ENCODE measurements at regions of chr20 and their contacts with region 1.

Region 1: GRCh38 chr20:31822421-31823330 is 3.5 kb downstream of the MYLK2 start:
- DNase-seq: peak; percentile 81 to 96
- ATAC-seq: peak; percentile 74 to 86
- H3K4me3 ChIP-seq: peak overlapping the region; percentile 21 to 66 (median 26)
- H3K27ac ChIP-seq: peak overlapping the region; percentile 82 to 95 (median 93)
- H3K4me1 ChIP-seq: peaks cover 49 to 79% of the 10 kb centered on the region in 2 donors
- H3K27me3 ChIP-seq: no peaks in the 10 kb centered on the region
- CTCF ChIP-seq: peak; percentile 97 to 99 (median 99)
- POLR2A ChIP-seq: peak in 1 of 2 donors; percentile 28

Region 2: DNA sequence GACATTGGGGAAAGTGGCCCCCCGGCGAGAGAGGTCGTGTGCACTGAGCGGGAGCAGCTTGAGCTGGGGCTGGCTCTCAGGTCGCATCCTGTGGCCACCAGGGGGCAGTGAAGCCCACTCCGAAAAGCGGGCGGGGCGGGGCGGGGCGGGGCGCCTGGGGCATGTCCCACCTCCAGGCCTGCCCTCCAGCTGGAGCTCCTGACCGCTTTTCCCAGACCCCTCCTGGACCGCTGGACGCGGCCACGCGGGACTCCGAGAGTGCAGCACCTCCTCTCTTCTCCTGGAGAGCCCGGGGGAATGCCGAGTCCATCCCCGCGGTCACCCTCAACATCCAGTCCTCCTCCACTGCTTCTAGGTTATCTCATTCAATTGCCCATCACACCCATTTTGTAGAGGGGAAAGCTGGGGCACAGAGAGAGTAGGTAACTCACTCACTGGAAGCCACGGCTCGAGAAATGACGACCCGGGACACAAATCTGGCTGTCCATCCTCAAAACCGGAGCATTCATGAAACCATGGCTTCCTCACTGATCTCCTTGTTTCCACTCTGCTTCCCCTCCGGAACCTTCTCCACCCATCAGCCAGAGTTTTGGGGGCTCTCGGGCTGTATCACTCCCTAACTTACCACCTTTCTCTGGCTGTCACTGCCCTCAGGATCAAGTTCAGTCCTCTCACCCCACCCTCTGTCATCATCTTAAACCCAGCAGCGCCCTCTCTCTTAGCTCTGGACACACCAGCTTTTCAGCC is 160.9 kb before region 1 on chr20:
- in situ Hi-C with region 1: loop called in 1 of 4 experiments (anchors 25 kb)
- intact Hi-C with region 1: no loop called
- DNase-seq: peak; percentile 60 to 74
- ATAC-seq: peak; percentile 83 to 86
- H3K4me3 ChIP-seq: peak overlapping the region; percentile 30 to 62 (median 46)
- H3K27ac ChIP-seq: peak overlapping the region; percentile 63 to 98 (median 80)
- H3K4me1 ChIP-seq: peaks cover 35 to 38% of the 10 kb centered on the region in 2 donors
- H3K27me3 ChIP-seq: no peaks in the 10 kb centered on the region
- CTCF ChIP-seq: peak; percentile 53 to 94 (median 90)
- POLR2A ChIP-seq: peak; percentile 41 to 71

Region 3: GRCh38 chr20:31738729-31739561 is 83.7 kb before region 1 on chr20 and contains the start of gene TPX2:
- in situ Hi-C with region 1: loop called in 3 of 4 experiments (anchors 10 to 25 kb)
- intact Hi-C with region 1: no loop called
- DNase-seq: peak; percentile 95 to 96
- ATAC-seq: peak; percentile 100
- H3K4me3 ChIP-seq: peak within 1 kb of the TSS; percentile 65 to 95 (median 70)
- H3K27ac ChIP-seq: peak within 1 kb of the TSS; percentile 79 to 88 (median 86)
- H3K4me1 ChIP-seq: peaks cover 9 to 12% of the 10 kb centered on the region in 2 donors
- H3K27me3 ChIP-seq: no peaks in the 10 kb centered on the region
- CTCF ChIP-seq: peak in 3 of 5 experiments; percentile 18 to 27 (median 24)
- POLR2A ChIP-seq: peak; percentile 69 to 70
- total RNA-seq, gene TPX2: 0.46 to 1.9 (median 1.0) TPM

Region 4: DNA sequence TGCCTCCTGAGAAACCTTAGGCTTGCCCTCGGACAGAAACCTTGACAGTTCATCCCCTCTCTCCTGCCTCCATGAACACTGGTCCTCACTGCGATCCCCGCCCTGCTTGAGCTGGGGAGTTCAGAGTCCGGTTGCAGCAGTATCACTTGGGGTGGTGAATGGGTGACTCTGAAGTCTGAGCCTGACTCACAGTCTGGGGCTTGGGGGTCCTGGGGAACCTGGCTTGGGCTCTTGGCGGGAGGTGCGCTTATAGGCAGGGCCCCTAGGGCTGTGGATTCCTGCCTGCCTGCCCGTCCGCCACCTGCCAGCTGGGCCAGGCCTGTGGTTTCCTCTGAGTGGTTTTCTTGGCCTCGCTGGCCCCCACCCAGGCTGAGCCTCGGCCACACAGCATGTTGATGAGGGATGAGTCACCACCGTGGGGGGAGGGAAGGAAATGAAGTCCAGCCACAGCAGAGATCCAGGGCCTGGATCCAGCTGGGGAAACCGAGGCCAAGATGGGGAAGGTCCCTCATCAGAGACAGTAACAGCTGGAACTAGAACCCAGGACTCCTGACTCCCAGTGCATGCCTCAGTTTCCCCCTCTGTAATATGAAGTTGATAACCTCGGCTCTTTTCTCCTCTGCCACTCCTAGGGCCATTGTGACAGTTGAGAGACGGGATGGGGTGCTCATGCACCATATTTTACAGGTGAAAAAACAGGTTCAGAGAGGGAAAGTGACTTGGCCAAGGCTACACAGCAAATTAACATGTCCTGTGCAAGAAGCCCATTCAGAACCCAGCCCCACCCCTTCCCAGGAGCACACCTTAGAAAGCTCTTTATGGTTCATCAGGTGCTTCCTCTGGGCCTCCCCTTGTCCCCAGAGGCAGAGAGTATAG is 13.5 kb after region 1 on chr20:
- in situ Hi-C with region 1: no loop called
- intact Hi-C with region 1: loop called (anchors 2 kb)
- DNase-seq: peak; percentile 89 to 94
- ATAC-seq: peak; percentile 81 to 96
- H3K4me3 ChIP-seq: no peak overlapping the region
- H3K27ac ChIP-seq: peak overlapping the region; percentile 79 to 95 (median 80)
- H3K4me1 ChIP-seq: peaks cover 14 to 33% of the 10 kb centered on the region in 2 donors
- H3K27me3 ChIP-seq: no peaks in the 10 kb centered on the region
- CTCF ChIP-seq: no peak
- POLR2A ChIP-seq: no peak

Region 5: DNA sequence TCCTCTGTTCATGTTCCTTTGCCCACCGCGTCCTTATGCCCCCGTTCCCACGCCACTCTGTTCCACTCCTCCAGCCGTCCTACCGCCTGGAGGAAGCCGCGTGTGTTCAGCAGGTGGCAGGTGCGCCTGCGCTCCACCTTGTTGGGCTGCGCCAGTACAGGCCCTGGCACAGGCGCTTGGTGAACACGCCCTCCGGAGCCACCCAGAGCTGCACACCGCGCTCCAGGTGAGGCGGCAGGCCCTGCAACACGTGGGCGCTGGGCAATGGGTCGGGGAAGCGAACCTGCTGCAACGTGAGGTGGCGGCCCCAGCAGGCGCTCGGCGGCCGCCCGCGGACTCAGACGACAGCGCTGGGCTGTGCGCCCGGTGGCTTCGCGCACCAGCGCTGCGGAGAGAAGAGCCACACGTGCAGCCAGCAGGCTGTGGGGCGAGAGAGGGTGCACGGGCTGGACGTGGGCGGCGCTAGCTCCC is 26.8 kb after region 1 on chr20:
- in situ Hi-C with region 1: no loop called
- intact Hi-C with region 1: loop called (anchors 1 kb)
- DNase-seq: no peak
- ATAC-seq: no peak
- H3K4me3 ChIP-seq: no peak overlapping the region
- H3K27ac ChIP-seq: no peak overlapping the region
- H3K4me1 ChIP-seq: peaks cover 3 to 11% of the 10 kb centered on the region in 2 donors
- H3K27me3 ChIP-seq: peaks cover 0 to 9% (median 4%) of the 10 kb centered on the region in 3 donors
- CTCF ChIP-seq: no peak
- POLR2A ChIP-seq: no peak

Region 6: GRCh38 chr20:31951530-31952453 is 129.1 kb after region 1 on chr20 and contains the start of gene PDRG1:
- in situ Hi-C with region 1: loop called in 1 of 4 experiments (anchors 10 kb)
- intact Hi-C with region 1: loop called (anchors 1 kb)
- DNase-seq: peak; percentile 90 to 93
- ATAC-seq: peak; percentile 95 to 97
- H3K4me3 ChIP-seq: peak within 1 kb of the TSS; percentile 87 to 99 (median 90)
- H3K27ac ChIP-seq: peak within 1 kb of the TSS; percentile 83 to 92 (median 86)
- H3K4me1 ChIP-seq: peaks cover 10 to 11% of the 10 kb centered on the region in 2 donors
- H3K27me3 ChIP-seq: no peaks in the 10 kb centered on the region
- CTCF ChIP-seq: peak; percentile 83 to 97 (median 89)
- POLR2A ChIP-seq: peak; percentile 72 to 77
- total RNA-seq, gene PDRG1: 7.0 to 12.9 (median 9.6) TPM

Region 7: GRCh38 chr20:32031007-32031958 is 208.6 kb after region 1 on chr20:
- in situ Hi-C with region 1: loop called in 1 of 4 experiments (anchors 10 kb)
- intact Hi-C with region 1: loop called (anchors 1 kb)
- DNase-seq: peak; percentile 40 to 56
- ATAC-seq: peak; percentile 71 to 80
- H3K4me3 ChIP-seq: peak overlapping the region; percentile 25 to 43 (median 35)
- H3K27ac ChIP-seq: no peak overlapping the region
- H3K4me1 ChIP-seq: peaks cover 0 to 3% of the 10 kb centered on the region in 2 donors
- H3K27me3 ChIP-seq: peaks cover 8 to 12% (median 12%) of the 10 kb centered on the region in 3 donors
- CTCF ChIP-seq: peak; percentile 79 to 89 (median 88)
- POLR2A ChIP-seq: no peak

Measured in gastrocnemius medialis (tissue), 4 donors.